Colonic mucosa (tissue), 4 donors: ENCODE measurements at regions of chr18 and their contacts with region 1.

Region 1: DNA sequence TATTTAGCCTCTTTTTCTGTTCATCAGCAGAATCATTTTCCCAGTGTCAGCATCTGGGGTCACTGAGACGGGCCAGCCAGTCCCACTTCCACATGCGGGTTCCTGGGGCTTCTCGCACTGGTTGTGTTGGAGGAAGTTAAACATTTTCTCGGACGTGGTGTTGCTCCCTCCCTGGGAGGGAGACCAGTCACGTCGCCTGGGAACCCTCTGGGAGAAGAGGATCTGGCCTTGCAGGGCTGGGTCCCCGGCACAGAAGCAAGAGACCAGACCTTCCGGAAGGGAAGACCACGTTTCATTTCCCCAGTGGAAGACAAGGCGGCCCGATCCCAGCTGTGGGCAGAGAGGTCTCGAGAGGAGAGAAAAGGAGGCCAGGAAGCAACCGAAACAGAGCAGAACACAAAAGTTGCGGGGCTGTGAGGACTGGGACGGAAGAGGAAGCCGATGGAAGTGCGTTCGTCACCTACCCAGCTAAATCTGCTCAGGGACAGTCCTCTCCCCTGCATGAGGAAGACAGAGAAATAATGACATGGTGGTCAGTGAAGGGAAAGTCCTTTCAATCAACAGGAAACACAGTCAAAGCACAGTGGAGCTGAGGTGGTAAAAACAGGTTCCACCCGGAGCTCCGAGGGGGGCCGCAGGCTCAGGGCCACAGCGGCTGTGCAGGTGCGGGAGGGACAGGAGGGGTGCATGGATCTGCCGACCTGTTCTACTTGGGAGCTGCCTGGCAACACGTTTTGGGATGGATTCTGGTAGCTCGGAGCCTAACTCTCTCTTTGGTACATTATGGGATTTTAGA is 144.4 kb downstream of the MBP start:
- DNase-seq: peak; percentile 21
- H3K4me3 ChIP-seq: no peak overlapping the region
- H3K27ac ChIP-seq: no peak overlapping the region
- H3K4me1 ChIP-seq: no peaks in the 10 kb centered on the region
- H3K27me3 ChIP-seq: no peaks in the 10 kb centered on the region
- CTCF ChIP-seq: no peak

Region 2: GRCh38 chr18:76874642-76875389 is 113.4 kb before region 1 on chr18:
- intact Hi-C with region 1: loop called (anchors 5 kb)
- DNase-seq: no peak
- H3K4me3 ChIP-seq: no peak overlapping the region
- H3K27ac ChIP-seq: no peak overlapping the region
- H3K4me1 ChIP-seq: no peaks in the 10 kb centered on the region
- H3K27me3 ChIP-seq: no peaks in the 10 kb centered on the region
- CTCF ChIP-seq: no peak